Endothelial cell of umbilical vein (primary cell): ENCODE measurements at regions of chr10 and their contacts with region 1.

Region 1: GRCh38 chr10:14751014-14751896 is 23.4 kb downstream of the FAM107B start:
- DNase-seq: no peak
- H3K4me3 ChIP-seq: no peak overlapping the region
- H3K27ac ChIP-seq: no peak overlapping the region
- H3K4me1 ChIP-seq: peaks cover 13% of the 10 kb centered on the region
- H3K27me3 ChIP-seq: peaks cover 0 to 1% of the 10 kb centered on the region in 2 experiments
- CTCF ChIP-seq: no peak
- POLR2A ChIP-seq: no peak

Region 2: DNA sequence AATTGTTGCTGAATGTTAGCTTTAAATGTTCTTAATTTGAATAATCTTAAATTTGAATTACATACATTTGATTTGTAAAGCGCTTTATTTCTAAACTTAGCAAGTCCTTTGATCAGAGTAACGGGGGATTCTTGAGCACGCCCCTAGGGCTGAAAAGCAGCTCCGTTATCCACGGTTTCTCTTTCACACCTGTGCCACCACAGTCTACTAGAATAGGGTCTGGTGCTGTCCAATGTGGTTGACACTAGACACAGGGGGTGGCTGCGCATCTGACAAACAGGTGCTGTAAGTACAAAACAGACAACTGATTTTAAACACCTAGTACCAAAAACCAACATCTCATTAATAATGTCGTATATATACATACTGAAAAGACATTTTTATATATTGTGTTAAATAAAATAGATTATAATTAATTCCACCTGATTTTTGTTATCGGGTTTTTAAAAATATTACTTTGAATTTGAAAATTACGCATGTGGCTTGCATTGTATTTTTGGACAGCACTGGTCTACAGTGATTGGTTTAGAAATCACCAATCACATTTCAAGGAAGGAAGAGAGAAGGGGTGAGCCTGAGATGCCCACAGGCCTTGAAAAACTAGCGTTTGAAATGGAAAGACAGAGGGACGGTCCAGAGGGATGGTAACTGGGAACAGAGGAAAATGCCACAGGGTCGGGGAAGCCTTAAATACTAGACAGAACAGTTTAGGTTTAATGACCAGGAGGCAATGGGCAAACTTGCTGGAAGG is 1410.5 kb before region 1 on chr10:
- CTCF ChIA-PET with region 1: no interaction called
- POLR2A ChIA-PET with region 1: interaction called, 10 read pairs
- dilution Hi-C with region 1: no loop called
- intact Hi-C with region 1: no loop called
- DNase-seq: no peak
- H3K4me3 ChIP-seq: no peak overlapping the region
- H3K27ac ChIP-seq: no peak overlapping the region
- H3K4me1 ChIP-seq: peaks cover 1% of the 10 kb centered on the region
- H3K27me3 ChIP-seq: no peaks in the 10 kb centered on the region
- CTCF ChIP-seq: no peak
- POLR2A ChIP-seq: no peak

Region 3: GRCh38 chr10:14543046-14543903 is 208.0 kb before region 1 on chr10:
- CTCF ChIA-PET with region 1: no interaction called
- POLR2A ChIA-PET with region 1: no interaction called
- dilution Hi-C with region 1: no loop called
- intact Hi-C with region 1: no loop called
- DNase-seq: no peak
- H3K4me3 ChIP-seq: no peak overlapping the region
- H3K27ac ChIP-seq: no peak overlapping the region
- H3K4me1 ChIP-seq: peaks cover 30% of the 10 kb centered on the region
- H3K27me3 ChIP-seq: no peaks in the 10 kb centered on the region
- CTCF ChIP-seq: no peak
- POLR2A ChIP-seq: no peak